Activated CD8-positive, alpha-beta memory T cell treated with anti-CD3 and anti-CD28 coated beads, Interleukin-2, amount 10 ng/mL, durations not matched to agents 7 days and 5 days (primary cell): ENCODE measurements at regions of chr20 and their contacts with region 1.

Region 1: GRCh38 chr20:47272893-47273590 is 83.5 kb downstream of the ZMYND8 start:
- DNase-seq: peak; percentile 62
- ATAC-seq: peak; percentile 54
- H3K4me3 Mint-ChIP-seq: no peak overlapping the region
- H3K27ac Mint-ChIP-seq: no peak overlapping the region
- H3K4me1 Mint-ChIP-seq: peaks cover 42% of the 10 kb centered on the region
- H3K27me3 Mint-ChIP-seq: no peaks in the 10 kb centered on the region

Region 2: DNA sequence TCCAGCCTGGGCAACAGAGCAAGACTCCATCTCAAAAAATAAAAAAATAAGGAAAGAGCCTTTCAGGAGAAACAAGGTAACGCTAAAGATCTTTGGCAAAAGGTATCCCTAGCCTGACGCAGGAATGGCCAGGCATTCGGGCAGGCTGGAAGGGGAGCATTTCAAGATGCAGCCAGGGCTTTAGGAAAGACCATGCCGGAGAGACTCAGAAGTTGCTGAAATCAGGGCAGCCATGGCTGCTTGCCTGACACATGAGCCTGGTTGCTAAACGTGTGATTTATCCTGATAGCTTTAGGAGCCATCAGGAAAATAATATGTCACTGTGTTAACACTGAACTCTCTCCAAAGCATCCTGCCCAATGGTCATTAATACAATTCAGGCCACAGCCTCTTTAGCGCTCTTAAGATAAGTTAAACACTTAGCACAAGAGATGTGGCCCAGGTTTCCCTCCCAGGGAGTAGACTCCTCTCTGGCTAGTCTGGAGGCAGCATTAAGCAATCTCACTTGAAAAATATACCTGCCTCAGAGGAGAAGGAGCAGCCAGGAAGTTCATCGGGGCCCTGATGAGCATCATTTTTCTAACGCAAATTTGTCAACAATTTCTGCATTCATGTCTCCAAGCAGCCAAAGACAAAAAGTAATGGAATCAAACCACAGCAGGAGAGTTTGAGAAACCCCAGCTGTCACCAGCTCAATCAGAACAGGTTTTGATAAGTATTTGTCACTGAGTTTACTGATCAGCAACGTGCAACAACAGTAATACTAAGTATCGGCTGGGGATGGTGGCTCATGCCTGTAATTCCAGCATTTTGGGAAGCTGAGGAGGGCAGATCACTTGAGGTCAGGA is 116.5 kb before region 1 on chr20:
- CTCF ChIA-PET with region 1: no interaction called
- DNase-seq: no peak
- ATAC-seq: no peak
- H3K4me3 Mint-ChIP-seq: no peak overlapping the region
- H3K27ac Mint-ChIP-seq: no peak overlapping the region
- H3K4me1 Mint-ChIP-seq: no peaks in the 10 kb centered on the region
- H3K27me3 Mint-ChIP-seq: no peaks in the 10 kb centered on the region

Region 3: GRCh38 chr20:47262365-47263013 is 10.6 kb before region 1 on chr20:
- CTCF ChIA-PET with region 1: interaction called, 11 read pairs
- DNase-seq: no peak
- ATAC-seq: no peak
- H3K4me3 Mint-ChIP-seq: no peak overlapping the region
- H3K27ac Mint-ChIP-seq: no peak overlapping the region
- H3K4me1 Mint-ChIP-seq: peaks cover 28% of the 10 kb centered on the region
- H3K27me3 Mint-ChIP-seq: no peaks in the 10 kb centered on the region

Region 4: DNA sequence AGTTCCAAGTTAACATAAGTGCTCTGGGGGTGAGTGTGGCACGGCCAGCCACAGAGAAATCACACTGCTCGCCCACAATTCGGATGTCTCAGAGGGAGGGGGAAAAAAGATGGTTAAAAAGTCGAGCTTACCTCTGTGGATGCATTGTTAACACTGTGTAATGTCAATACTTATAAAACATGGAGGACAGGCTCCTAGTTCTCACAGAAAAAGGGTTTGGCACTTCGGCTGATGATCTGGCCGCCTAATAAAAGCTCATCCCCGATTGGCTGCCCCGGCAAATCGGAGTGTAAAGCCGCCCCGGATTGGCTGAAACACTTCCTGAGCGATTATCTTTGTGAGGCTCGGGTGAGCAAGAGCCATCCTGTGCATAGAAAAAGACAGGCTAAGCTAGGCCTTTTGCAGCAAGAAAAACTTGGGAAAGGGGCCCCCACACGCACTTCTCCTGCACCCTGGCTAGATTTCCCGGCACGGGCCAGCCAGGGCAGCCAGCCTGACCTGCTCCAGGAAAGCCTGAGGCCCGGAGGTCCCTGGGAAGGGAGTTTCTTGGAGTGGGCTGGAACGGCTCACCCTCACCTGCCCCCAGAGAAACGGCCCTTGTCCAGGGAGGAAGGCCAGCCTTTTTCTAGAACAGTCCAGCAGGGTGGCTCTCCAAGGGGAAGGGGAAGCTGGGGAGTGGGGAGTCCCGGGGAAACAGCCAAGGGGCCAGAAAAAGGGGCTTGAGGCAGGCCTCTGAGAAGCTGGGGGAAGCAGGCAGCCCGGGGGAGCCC is 83.7 kb after region 1 on chr20 and contains the start of gene ZMYND8:
- CTCF ChIA-PET with region 1: interaction called, 33 read pairs
- DNase-seq: peak; percentile 96
- ATAC-seq: peak; percentile 85
- H3K4me3 Mint-ChIP-seq: peak within 1 kb of the TSS; percentile 87
- H3K27ac Mint-ChIP-seq: peak within 1 kb of the TSS; percentile 99
- H3K4me1 Mint-ChIP-seq: peaks cover 62% of the 10 kb centered on the region
- H3K27me3 Mint-ChIP-seq: no peaks in the 10 kb centered on the region
- total RNA-seq, gene ZMYND8: 39.4 to 45.2 TPM

Region 5: DNA sequence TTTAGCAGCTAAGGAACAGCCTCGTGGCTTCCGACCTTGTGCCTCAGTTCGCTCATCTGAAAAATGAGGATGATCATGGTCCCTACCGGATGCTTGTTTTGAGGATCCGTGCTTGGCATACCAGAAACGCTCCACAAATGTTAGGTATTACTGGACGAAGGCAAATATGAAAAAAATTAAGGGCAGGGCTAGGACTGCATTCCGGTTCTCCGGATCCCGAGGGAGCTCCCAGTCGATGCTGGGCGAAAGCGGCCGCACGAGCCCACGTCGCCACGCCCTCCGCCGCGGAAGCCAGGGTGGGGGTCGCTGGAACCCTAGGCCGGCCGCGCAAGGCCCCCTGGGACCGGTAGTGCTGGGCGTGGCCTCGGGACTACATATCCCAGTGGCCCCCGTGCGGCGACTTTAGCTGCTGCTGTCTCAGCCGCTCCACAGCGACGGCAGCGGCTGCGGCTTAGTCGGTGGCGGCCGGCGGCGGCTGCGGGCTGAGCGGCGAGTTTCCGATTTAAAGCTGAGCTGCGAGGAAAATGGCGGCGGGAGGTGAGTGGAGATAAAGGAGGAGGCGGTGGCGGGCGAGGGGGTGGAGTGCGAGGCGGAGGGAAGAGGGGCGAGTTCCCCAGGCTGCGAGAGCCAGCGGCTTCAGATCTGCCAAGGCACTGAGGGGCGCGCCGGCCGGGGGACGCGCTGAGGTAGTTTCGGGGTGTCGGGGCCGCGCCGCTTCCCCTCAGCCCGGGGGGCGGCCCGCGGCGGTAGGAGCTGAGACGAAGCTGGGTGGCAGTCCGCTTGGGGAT is 228.6 kb after region 1 on chr20 and contains the start of gene NCOA3:
- CTCF ChIA-PET with region 1: interaction called, 15 read pairs
- DNase-seq: peak; percentile 97
- ATAC-seq: peak; percentile 83
- H3K4me3 Mint-ChIP-seq: peak within 1 kb of the TSS; percentile 96
- H3K27ac Mint-ChIP-seq: peak within 1 kb of the TSS; percentile 91
- H3K4me1 Mint-ChIP-seq: peaks cover 57% of the 10 kb centered on the region
- H3K27me3 Mint-ChIP-seq: peaks cover 2% of the 10 kb centered on the region
- total RNA-seq, gene NCOA3: 74.9 to 75.8 TPM

Region 6: DNA sequence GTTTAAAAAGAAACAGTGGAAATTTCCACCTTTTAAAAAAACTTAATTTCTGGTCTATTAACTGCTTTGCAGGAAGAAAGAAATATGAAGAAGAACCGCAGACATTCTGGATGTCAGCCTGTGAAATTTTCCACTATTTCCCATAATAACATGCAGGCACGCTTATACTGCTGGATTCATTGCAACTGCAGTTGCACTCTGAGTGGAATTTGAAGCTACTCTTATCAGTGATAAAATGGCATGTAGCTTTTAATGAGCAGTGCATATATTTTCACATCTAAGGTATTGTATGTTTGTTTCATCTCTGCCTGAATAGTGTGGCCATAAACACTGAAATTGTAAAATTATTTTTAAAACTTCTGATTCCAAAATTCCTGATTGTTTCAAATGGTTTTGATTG is 256.8 kb after region 1 on chr20:
- CTCF ChIA-PET with region 1: no interaction called
- DNase-seq: no peak
- ATAC-seq: no peak
- H3K4me3 Mint-ChIP-seq: no peak overlapping the region
- H3K27ac Mint-ChIP-seq: no peak overlapping the region
- H3K4me1 Mint-ChIP-seq: peaks cover 31% of the 10 kb centered on the region
- H3K27me3 Mint-ChIP-seq: no peaks in the 10 kb centered on the region

Region 7: DNA sequence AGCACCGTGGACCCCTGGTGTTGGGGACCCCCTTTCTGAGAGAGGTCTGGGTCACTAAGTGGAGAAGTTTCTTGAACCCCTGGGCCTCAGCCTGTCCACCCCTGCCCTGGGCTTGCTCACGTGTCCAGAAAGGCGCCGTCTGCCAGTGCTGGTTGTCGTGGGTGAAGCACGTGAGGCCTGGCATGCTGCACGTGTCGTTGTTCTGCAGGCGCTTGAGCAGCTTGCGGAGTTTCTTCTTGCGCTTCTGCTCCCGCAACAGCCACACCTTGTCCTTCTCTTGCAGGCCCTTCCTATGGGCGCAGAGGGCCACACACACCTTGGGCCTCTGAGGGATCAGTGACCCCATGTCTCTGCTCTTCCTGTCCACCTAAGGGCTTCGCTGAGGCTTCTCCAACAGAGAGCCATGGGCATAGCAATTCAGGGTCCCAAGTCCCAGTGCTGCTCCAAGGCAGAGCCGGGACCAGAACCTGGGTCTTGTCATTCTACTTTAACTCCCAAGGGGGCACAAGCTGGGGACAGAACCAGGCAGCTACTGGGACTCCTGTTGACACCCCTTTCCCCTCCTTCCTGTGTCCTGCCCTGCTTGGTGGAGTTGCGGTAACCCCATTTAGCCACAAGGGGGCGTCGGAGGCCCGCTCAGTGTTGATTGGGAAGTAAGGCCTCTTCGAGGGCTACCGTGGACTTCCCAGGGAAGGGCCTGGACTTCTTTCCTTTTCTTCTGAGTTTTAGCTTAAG is 390.5 kb after region 1 on chr20:
- CTCF ChIA-PET with region 1: interaction called, 10 read pairs
- DNase-seq: peak; percentile 85
- ATAC-seq: peak; percentile 78
- H3K4me3 Mint-ChIP-seq: no peak overlapping the region
- H3K27ac Mint-ChIP-seq: peak overlapping the region; percentile 29
- H3K4me1 Mint-ChIP-seq: peaks cover 8% of the 10 kb centered on the region
- H3K27me3 Mint-ChIP-seq: no peaks in the 10 kb centered on the region